ENCODE measurements at regions of chr7 and their contacts with region 1.

Region 1: DNA sequence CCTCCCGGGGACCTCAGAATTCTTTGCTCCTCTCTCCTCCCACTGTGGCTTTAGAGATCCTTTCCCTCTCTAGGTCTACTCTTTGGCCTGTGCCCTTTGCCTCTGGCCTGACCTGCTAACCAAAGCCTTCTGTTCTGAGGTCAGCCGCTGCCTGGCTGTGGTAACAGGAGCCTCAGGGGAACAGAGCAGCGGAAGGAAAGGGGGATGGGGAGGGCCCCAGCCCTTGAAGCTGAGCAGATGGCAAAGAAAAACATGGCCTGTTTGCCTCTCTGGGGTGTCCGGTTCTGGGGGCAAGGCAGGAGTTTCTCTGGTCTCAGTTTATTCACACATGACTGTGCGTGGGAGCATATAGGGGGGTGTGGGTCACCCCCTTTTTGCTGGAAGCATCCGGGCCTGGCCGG is 28.2 kb downstream of the COL26A1 start:
- DNase-seq: peak; percentile 60
- ATAC-seq: peak; percentile 99
- H3K4me3 ChIP-seq: peak overlapping the region; percentile 9; the same call in 1 of the 2 replicates
- H3K27ac ChIP-seq: peak overlapping the region; percentile 39; the same call in 1 of the 2 replicates
- H3K4me1 ChIP-seq: peaks cover 9% of the 10 kb centered on the region
- H3K27me3 ChIP-seq: no peaks in the 10 kb centered on the region
- CTCF ChIP-seq: no peak
- EP300 ChIP-seq: peak; percentile 60 to 69; a peak in 2 of 4 replicates
- POLR2A ChIP-seq: no peak
- RAD21 ChIP-seq: no peak; the same call in 1 of the 2 replicates

Region 2: GRCh38 chr7:101222275-101222830 is 168.5 kb before region 1 on chr7:
- CTCF ChIA-PET with region 1: no interaction called
- POLR2A ChIA-PET with region 1: no interaction called
- RAD21 ChIA-PET with region 1: no interaction called
- SMC1A ChIA-PET with region 1: no interaction called
- in situ Hi-C with region 1: no loop called
- intact Hi-C with region 1: no loop called
- DNase-seq: no peak
- ATAC-seq: no peak
- H3K4me3 ChIP-seq: no peak overlapping the region
- H3K27ac ChIP-seq: no peak overlapping the region
- H3K4me1 ChIP-seq: no peaks in the 10 kb centered on the region
- H3K27me3 ChIP-seq: no peaks in the 10 kb centered on the region
- CTCF ChIP-seq: no peak
- EP300 ChIP-seq: no peak
- POLR2A ChIP-seq: no peak
- RAD21 ChIP-seq: no peak

Region 3: DNA sequence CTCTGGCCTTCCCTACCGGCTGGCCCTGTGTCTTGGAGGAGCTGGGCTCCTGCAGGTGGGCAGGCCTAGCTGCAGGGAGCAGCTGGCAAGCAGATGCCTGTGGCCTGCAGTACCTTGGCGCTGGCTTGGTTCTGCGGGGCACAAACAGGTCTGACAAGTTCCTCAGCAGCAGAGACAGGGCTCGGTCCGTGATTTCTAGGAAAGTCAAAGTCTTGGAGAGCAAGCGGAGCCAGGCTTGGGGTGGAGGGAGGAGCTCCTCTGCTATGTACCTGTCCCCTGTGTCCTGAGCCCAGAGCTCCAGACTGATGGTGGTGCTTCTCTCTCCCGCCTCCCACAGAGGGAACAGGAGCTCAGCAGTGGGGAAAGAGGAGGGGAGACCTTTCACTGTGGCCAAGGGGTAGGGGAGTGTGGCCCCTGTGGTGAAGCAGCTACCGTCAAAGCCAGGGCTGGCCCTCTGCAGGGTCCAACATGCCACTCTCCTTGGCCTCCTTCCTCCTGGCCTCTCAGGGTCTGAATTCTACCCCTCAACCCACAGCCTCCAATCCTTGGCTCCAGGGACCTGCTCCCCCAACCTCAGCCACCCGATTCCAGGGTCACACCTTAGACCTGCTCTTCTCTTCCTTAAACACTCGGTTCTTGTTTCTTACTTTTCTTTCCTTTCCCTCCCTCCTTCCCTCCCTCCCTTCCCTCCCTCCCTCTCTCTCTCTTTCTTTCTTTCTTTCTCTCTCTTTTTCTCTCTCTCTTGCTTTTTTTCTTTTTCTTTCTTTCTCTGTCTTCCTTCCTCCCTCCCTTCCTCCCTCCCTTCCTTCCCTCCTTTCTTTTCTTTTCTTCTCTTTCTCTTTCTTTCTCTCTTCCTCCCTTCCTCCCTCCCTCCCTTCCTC is 218.2 kb after region 1 on chr7:
- CTCF ChIA-PET with region 1: no interaction called
- POLR2A ChIA-PET with region 1: interaction called, 10 read pairs
- RAD21 ChIA-PET with region 1: no interaction called
- SMC1A ChIA-PET with region 1: no interaction called
- in situ Hi-C with region 1: no loop called
- intact Hi-C with region 1: no loop called
- DNase-seq: no peak
- ATAC-seq: no peak
- H3K4me3 ChIP-seq: no peak overlapping the region
- H3K27ac ChIP-seq: no peak overlapping the region
- H3K4me1 ChIP-seq: no peaks in the 10 kb centered on the region
- H3K27me3 ChIP-seq: peaks cover 0 to 2% of the 10 kb centered on the region in 2 experiments; a peak in 2 of 4 replicates
- CTCF ChIP-seq: no peak
- EP300 ChIP-seq: no peak
- POLR2A ChIP-seq: no peak
- RAD21 ChIP-seq: no peak